ENCODE measurements at regions of chr1 and their contacts with region 1.

Region 1: DNA sequence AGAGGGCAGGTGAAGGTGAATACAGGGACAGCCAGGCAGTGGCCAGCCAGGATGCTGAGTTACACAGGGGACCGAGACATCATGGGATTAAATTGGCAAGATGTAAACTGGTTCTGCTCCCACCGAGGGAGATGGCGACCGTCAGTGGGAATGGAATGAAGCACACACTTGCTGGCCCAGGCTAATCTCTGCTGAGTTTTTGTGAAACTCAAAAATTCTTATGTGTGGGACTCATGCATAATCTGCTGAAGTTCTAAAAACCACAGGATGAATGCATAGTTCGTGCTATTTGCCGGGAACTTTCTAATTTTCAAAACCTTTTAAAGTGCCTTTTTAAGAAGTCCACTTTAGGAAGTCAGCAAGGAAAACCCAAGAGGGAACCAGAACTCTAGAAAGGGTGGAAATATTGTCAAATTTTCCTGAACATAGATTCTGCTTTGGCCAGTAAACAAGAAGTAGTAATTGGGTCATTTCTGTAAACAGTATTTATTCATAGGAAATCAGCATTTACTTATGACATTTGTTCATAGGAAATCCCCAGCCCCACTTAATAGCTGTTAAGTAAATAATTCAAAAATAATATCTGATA is 85.4 kb upstream of the ROR1 start:
- DNase-seq: no peak
- H3K4me3 ChIP-seq: no peak overlapping the region
- H3K27ac ChIP-seq: no peak overlapping the region
- H3K4me1 ChIP-seq: peaks cover 6% of the 10 kb centered on the region
- H3K27me3 ChIP-seq: no peaks in the 10 kb centered on the region
- CTCF ChIP-seq: no peak
- POLR2A ChIP-seq: no peak

Region 2: GRCh38 chr1:63189677-63190076 is 498.7 kb before region 1 on chr1:
- intact Hi-C with region 1: no loop called
- DNase-seq: no peak
- H3K4me3 ChIP-seq: no peak overlapping the region
- H3K27ac ChIP-seq: no peak overlapping the region
- H3K4me1 ChIP-seq: no peaks in the 10 kb centered on the region
- H3K27me3 ChIP-seq: no peaks in the 10 kb centered on the region
- CTCF ChIP-seq: no peak
- POLR2A ChIP-seq: no peak

Region 3: GRCh38 chr1:64147759-64148158 is 459.4 kb after region 1 on chr1:
- intact Hi-C with region 1: loop called (anchors 10 kb)
- DNase-seq: no peak
- H3K4me3 ChIP-seq: no peak overlapping the region
- H3K27ac ChIP-seq: no peak overlapping the region
- H3K4me1 ChIP-seq: no peaks in the 10 kb centered on the region
- H3K27me3 ChIP-seq: no peaks in the 10 kb centered on the region
- CTCF ChIP-seq: no peak
- POLR2A ChIP-seq: no peak

Region 4: GRCh38 chr1:64242895-64243756 is 554.7 kb after region 1 on chr1:
- intact Hi-C with region 1: loop called (anchors 10 kb)
- DNase-seq: no peak
- H3K4me3 ChIP-seq: no peak overlapping the region
- H3K27ac ChIP-seq: no peak overlapping the region
- H3K4me1 ChIP-seq: no peaks in the 10 kb centered on the region
- H3K27me3 ChIP-seq: no peaks in the 10 kb centered on the region
- CTCF ChIP-seq: peak; percentile 30 to 50 (median 34)
- POLR2A ChIP-seq: no peak

Region 5: GRCh38 chr1:64396817-64397216 is 708.4 kb after region 1 on chr1:
- intact Hi-C with region 1: no loop called
- DNase-seq: no peak
- H3K4me3 ChIP-seq: no peak overlapping the region
- H3K27ac ChIP-seq: no peak overlapping the region
- H3K4me1 ChIP-seq: no peaks in the 10 kb centered on the region
- H3K27me3 ChIP-seq: no peaks in the 10 kb centered on the region
- CTCF ChIP-seq: no peak
- POLR2A ChIP-seq: no peak